ENCODE measurements at regions of chr6 and their contacts with region 1.

Region 1: GRCh38 chr6:122330315-122330714 is 69.1 kb upstream of the HSF2 start:
- DNase-seq: no peak
- H3K4me3 ChIP-seq: no peak overlapping the region
- H3K27ac ChIP-seq: no peak overlapping the region
- H3K4me1 ChIP-seq: no peaks in the 10 kb centered on the region
- H3K27me3 ChIP-seq: no peaks in the 10 kb centered on the region
- CTCF ChIP-seq: no peak

Region 2: GRCh38 chr6:121951918-121952379 is 378.4 kb before region 1 on chr6:
- CTCF ChIA-PET with region 1: no interaction called
- POLR2A ChIA-PET with region 1: interaction called, 15 read pairs
- intact Hi-C with region 1: no loop called
- DNase-seq: peak in 1 of 2 experiments; percentile 5
- H3K4me3 ChIP-seq: no peak overlapping the region
- H3K27ac ChIP-seq: no peak overlapping the region
- H3K4me1 ChIP-seq: no peaks in the 10 kb centered on the region
- H3K27me3 ChIP-seq: no peaks in the 10 kb centered on the region
- CTCF ChIP-seq: no peak

Region 3: GRCh38 chr6:122258839-122259238 is 71.5 kb before region 1 on chr6:
- CTCF ChIA-PET with region 1: no interaction called
- POLR2A ChIA-PET with region 1: no interaction called
- intact Hi-C with region 1: no loop called
- DNase-seq: no peak
- H3K4me3 ChIP-seq: no peak overlapping the region
- H3K27ac ChIP-seq: no peak overlapping the region
- H3K4me1 ChIP-seq: no peaks in the 10 kb centered on the region
- H3K27me3 ChIP-seq: no peaks in the 10 kb centered on the region
- CTCF ChIP-seq: no peak